Ovary (tissue), 10 donors: ENCODE measurements at regions of chr7 and their contacts with region 1.

Region 1: DNA sequence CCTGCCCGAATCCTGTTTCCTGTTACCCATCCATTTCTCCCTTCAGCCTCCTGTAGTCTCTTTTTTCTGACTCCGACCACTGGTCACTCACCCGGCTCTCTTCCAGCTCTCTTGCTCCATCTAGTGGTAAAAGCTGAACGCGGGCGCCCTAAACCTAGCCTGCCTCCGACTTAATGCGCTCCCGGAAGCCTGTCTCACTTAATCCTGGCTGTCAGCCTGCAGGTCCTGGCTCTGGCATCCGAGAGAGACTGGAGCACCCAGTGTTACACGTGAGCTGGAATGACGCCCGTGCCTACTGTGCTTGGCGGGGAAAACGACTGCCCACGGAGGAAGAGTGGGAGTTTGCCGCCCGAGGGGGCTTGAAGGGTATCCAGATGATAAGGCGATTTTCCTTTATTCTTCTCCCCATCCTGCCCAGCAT is 10.3 kb downstream of the SUMF2 start:
- DNase-seq: peak; percentile 74 to 87 (median 85)
- H3K4me3 ChIP-seq: no peak overlapping the region
- H3K27ac ChIP-seq: no peak overlapping the region
- H3K4me1 ChIP-seq: no peaks in the 10 kb centered on the region
- H3K27me3 ChIP-seq: no peaks in the 10 kb centered on the region
- CTCF ChIP-seq: peak; percentile 76 to 86 (median 80)
- EP300 ChIP-seq: no peak
- POLR2A ChIP-seq: no peak

Region 2: DNA sequence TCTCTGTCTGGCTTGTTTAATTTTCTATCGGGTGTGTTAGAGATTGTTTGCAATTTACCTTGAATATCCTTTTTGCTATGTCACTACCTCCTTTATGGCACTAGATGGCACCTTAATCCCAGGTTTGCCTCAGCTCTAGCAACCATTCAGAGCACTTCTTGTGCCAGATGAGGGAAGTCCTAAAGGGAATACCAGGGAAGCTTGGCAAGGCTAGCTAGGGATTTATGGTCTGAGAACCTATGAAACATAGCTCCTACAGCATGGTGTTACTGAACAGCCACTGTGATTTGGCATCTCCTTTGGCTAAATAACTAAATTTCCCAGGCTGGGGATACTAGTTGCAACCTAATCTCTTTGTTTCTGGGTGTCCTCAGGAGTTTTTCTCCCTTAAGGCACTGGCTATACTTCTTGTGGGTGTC is 433.1 kb before region 1 on chr7:
- intact Hi-C with region 1: loop called in 1 of 4 experiments (anchors 10 kb)
- DNase-seq: peak in 3 of 5 donors; percentile 23 to 37 (median 27)
- H3K4me3 ChIP-seq: no peak overlapping the region
- H3K27ac ChIP-seq: no peak overlapping the region
- H3K4me1 ChIP-seq: no peaks in the 10 kb centered on the region
- H3K27me3 ChIP-seq: no peaks in the 10 kb centered on the region
- CTCF ChIP-seq: peak; percentile 10 to 79 (median 70)
- EP300 ChIP-seq: no peak
- POLR2A ChIP-seq: no peak

Region 3: GRCh38 chr7:56009695-56010094 is 64.7 kb before region 1 on chr7:
- intact Hi-C with region 1: loop called in 2 of 4 experiments (anchors 10 kb)
- DNase-seq: no peak
- H3K4me3 ChIP-seq: no peak overlapping the region
- H3K27ac ChIP-seq: no peak overlapping the region
- H3K4me1 ChIP-seq: peaks cover 2% of the 10 kb centered on the region
- H3K27me3 ChIP-seq: no peaks in the 10 kb centered on the region
- CTCF ChIP-seq: no peak
- EP300 ChIP-seq: no peak
- POLR2A ChIP-seq: no peak